ENCODE measurements at regions of chr6 and their contacts with region 1.

Region 1: DNA sequence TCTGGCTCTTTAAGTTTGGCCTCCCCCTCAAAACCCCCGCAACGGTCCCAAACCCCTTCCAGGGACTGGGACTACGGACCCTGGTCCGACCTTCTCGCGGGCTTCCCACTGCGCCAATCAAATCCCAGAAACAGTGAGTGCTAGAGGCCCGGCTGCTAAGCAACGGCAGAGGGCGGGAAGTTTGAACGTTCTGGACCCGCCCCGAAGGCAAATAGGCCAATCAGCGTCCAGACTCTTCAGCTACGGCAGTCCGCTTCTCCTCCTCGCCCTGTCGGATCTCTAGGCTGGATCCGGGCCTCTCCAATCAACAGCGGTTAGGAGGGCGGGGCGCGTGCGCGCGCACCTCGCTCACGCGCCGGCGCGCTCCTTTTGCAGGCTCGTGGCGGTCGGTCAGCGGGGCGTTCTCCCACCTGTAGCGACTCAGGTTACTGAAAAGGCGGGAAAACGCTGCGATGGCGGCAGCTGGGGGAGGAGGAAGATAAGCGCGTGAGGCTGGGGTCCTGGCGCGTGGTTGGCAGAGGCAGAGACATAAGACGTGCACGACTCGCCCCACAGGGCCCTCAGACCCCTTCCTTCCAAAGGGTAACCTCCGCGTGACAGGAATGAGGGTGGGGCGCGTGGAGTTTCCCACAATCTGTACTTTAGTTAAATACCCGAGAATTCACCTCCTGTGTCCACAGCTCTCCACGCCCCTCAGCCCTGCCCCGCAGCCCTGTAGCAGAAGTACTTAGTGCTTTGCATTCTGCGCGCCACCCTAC is at the start of gene MSH5:
- DNase-seq: peak; percentile 99
- ATAC-seq: peak; percentile 83
- H3K4me3 Mint-ChIP-seq: peak within 1 kb of the TSS; percentile 92
- H3K27ac Mint-ChIP-seq: peak within 1 kb of the TSS; percentile 96
- H3K4me1 Mint-ChIP-seq: peaks cover 56% of the 10 kb centered on the region
- H3K27me3 Mint-ChIP-seq: no peaks in the 10 kb centered on the region
- total RNA-seq, gene MSH5: 64.8 to 73.6 TPM

Region 2: GRCh38 chr6:31652925-31653718 is 86.7 kb before region 1 on chr6:
- CTCF ChIA-PET with region 1: interaction called, 5 read pairs
- POLR2A ChIA-PET with region 1: interaction called, 19 read pairs
- DNase-seq: peak; percentile 93
- ATAC-seq: peak; percentile 72
- H3K4me3 Mint-ChIP-seq: peak overlapping the region; percentile 96
- H3K27ac Mint-ChIP-seq: peak overlapping the region; percentile 98
- H3K4me1 Mint-ChIP-seq: peaks cover 66% of the 10 kb centered on the region
- H3K27me3 Mint-ChIP-seq: no peaks in the 10 kb centered on the region

Region 3: DNA sequence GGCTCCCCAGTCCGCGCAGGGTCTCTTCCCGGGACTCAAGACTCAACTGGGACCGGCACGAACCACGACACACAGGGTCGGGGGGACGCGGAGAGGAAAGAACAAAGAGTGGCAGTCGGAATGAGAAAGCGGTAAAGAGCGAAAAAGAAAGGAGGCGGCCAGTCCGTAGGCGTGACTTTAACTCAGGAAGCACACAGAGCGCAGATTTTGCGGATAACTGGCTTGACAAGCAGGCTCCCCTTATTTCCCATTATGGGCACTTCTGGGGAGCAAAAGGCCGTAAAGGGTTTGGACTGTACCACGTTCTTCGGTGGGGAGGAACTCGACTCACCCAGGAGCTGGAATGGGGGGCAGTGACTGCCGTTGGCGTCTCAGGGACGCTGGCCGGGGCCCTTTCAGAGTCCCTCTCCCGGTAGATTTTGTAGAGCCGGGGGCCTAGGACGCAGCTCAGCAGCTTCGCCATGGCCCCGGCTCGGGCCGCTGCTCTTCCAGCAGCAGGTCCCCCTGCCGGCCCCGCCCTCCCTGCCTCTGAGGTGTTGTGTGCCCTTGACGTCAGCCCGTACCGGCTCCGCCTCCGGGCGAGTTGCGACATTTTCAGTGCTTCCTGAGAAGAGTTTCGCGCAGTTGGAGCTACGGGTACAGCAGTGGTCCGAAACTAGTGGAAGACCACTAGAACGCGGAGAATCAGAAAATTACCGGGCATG is 36.8 kb before region 1 on chr6 and contains the start of gene ABHD16A:
- CTCF ChIA-PET with region 1: interaction called, 7 read pairs
- POLR2A ChIA-PET with region 1: interaction called, 20 read pairs
- DNase-seq: peak; percentile 99
- ATAC-seq: peak; percentile 96
- H3K4me3 Mint-ChIP-seq: peak within 1 kb of the TSS; percentile 97
- H3K27ac Mint-ChIP-seq: peak within 1 kb of the TSS; percentile 95
- H3K4me1 Mint-ChIP-seq: peaks cover 19% of the 10 kb centered on the region
- H3K27me3 Mint-ChIP-seq: no peaks in the 10 kb centered on the region
- total RNA-seq, gene ABHD16A: 52.1 to 55.4 TPM

Region 4: DNA sequence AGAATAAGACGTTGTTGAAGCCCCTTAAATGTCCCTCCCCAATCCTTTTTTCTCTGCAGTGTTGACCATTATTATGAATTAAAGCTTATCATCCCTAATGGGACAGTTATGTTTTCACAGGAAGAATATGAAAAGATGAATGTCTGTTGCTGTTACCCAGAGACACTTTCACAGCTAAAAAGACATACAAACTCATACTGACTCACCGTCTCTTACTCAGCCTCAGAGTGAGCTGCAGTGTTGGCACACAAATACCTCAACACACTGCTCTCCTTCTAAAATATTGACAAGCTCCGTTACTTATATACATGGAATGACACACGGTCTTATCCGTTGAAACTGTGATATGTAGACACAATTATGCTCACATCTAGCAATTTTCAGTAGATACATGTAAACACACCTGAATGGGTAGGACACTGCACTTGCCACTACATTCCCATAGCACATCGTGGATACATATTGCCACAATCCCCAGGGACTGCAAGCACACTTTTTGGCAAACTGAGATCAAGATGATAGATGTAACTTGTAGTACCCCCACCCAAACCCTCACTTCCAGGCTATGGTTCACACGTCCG is 13.0 kb after region 1 on chr6:
- CTCF ChIA-PET with region 1: interaction called, 4 read pairs
- POLR2A ChIA-PET with region 1: interaction called, 19 read pairs
- DNase-seq: no peak
- ATAC-seq: no peak
- H3K4me3 Mint-ChIP-seq: no peak overlapping the region
- H3K27ac Mint-ChIP-seq: no peak overlapping the region
- H3K4me1 Mint-ChIP-seq: no peaks in the 10 kb centered on the region
- H3K27me3 Mint-ChIP-seq: no peaks in the 10 kb centered on the region

Region 5: GRCh38 chr6:31776989-31777666 is 37.3 kb after region 1 on chr6 and contains the start of gene VWA7:
- CTCF ChIA-PET with region 1: interaction called, 118 read pairs
- POLR2A ChIA-PET with region 1: interaction called, 31 read pairs
- DNase-seq: peak; percentile 81
- ATAC-seq: peak; percentile 80
- H3K4me3 Mint-ChIP-seq: peak within 1 kb of the TSS; percentile 50
- H3K27ac Mint-ChIP-seq: peak within 1 kb of the TSS; percentile 91
- H3K4me1 Mint-ChIP-seq: peaks cover 41% of the 10 kb centered on the region
- H3K27me3 Mint-ChIP-seq: no peaks in the 10 kb centered on the region
- total RNA-seq, gene VWA7: 6.4 to 6.6 TPM

Region 6: DNA sequence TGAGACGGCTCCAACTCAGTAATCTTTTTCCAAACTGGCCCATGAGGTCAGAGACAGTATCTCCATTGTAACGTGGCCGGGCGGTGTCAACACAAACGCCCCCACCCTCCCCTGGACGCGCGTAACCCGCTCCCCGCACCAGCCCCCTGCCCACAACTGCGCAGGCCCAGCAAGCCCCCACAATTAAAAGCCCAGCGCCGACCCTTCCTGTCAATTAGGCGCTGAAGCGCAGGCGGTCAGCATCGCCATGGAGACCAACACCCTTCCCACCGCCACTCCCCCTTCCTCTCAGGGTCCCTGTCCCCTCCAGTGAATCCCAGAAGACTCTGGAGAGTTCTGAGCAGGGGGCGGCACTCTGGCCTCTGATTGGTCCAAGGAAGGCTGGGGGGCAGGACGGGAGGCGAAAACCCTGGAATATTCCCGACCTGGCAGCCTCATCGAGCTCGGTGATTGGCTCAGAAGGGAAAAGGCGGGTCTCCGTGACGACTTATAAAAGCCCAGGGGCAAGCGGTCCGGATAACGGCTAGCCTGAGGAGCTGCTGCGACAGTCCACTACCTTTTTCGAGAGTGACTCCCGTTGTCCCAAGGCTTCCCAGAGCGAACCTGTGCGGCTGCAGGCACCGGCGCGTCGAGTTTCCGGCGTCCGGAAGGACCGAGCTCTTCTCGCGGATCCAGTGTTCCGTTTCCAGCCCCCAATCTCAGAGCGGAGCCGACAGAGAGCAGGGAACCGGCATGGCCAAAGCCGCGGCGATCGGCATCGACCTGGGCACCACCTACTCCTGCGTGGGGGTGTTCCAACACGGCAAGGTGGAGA is 75.4 kb after region 1 on chr6 and contains the starts of genes HSPA1A and HSPA1L:
- CTCF ChIA-PET with region 1: interaction called, 14 read pairs
- POLR2A ChIA-PET with region 1: interaction called, 37 read pairs
- DNase-seq: peak; percentile 82
- ATAC-seq: peak; percentile 29
- H3K4me3 Mint-ChIP-seq: peak within 1 kb of the TSS; percentile 89
- H3K27ac Mint-ChIP-seq: peak within 1 kb of the TSS; percentile 90
- H3K4me1 Mint-ChIP-seq: peaks cover 47% of the 10 kb centered on the region
- H3K27me3 Mint-ChIP-seq: no peaks in the 10 kb centered on the region
- total RNA-seq, gene HSPA1A: 75.6 to 75.7 TPM
- total RNA-seq, gene HSPA1L: 3.0 to 3.1 TPM

Region 7: DNA sequence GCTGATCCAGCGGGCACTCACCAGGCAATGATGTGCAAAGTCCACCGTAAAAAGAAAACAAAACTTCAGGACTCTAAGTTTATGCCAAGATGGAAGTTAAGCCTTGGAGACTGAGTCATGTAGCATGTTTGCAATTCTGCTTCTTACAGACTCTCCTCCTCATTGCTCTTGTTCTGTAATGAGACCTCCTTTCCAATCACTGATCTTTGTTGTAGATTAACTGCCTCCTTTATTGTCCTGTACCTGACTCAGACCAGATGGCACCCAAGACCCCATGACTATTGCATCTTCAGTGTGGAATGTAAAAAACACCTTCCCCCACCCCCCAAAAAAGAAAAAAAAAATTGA is 111.6 kb after region 1 on chr6:
- CTCF ChIA-PET with region 1: no interaction called
- POLR2A ChIA-PET with region 1: no interaction called
- DNase-seq: no peak
- ATAC-seq: no peak
- H3K4me3 Mint-ChIP-seq: no peak overlapping the region
- H3K27ac Mint-ChIP-seq: no peak overlapping the region
- H3K4me1 Mint-ChIP-seq: no peaks in the 10 kb centered on the region
- H3K27me3 Mint-ChIP-seq: no peaks in the 10 kb centered on the region

Measured in activated CD8-positive, alpha-beta T cell treated with anti-CD3 and anti-CD28 coated beads, Interleukin-2, amount 10 ng/mL, durations not matched to agents 7 days and 5 days (primary cell).